MCF 10A (cell line): ENCODE measurements at regions of chr6 and their contacts with region 1.

Region 1: GRCh38 chr6:109073344-109074132 is 21.1 kb downstream of the SESN1 start:
- DNase-seq: peak; percentile 85
- H3K4me3 Mint-ChIP-seq: no peak overlapping the region
- H3K27ac Mint-ChIP-seq: no peak overlapping the region
- H3K4me1 Mint-ChIP-seq: peaks cover 12% of the 10 kb centered on the region
- H3K27me3 Mint-ChIP-seq: no peaks in the 10 kb centered on the region
- CTCF ChIP-seq: peak; percentile 64

Region 2: DNA sequence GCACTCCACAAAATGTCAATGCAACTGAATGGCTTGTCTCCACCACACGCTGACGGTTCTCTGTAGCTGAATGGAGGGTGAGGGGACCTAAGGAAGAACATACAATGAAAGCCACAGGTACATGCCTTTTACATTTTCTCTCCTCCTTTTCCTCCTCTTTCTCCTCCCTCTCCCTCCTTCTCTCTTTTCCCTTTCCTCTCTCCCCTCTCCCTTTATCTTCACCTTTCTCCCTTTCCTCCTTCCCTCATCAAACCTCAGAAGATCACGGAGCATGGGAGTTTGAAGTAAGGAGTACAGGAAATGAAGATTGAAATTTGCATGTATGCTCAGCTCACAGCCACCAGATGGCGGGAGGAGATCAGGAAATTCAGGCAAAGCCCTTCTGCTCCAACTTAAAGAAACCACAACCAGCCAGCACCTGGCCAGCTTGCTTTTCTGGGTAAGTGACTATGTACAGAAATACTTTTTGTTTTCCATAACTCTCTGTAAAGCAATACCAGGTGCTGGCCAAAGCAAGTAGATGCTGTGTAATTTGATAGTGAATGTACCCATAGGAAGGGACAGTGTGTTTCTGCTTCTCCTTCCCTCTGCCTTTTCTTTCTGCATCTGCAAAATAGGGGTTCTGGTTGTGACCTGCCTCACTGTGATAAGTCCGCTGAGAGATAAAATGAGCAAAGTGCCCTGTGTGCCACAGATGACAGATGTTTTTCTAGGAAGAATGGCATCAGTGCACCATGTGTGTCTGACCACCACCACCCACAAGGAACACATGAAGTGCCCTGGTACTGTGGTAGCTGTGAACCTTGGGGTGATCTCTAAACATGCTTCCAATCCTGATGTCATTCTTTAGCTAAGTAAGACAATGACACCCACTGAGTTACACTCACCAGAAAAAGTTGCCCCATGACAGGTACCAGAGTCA is 531.4 kb before region 1 on chr6:
- CTCF ChIA-PET with region 1: interaction called, 109 read pairs
- POLR2A ChIA-PET with region 1: interaction called, 8 read pairs
- intact Hi-C with region 1: loop called (anchors 1 kb)
- DNase-seq: peak; percentile 81
- H3K4me3 Mint-ChIP-seq: no peak overlapping the region
- H3K27ac Mint-ChIP-seq: no peak overlapping the region
- H3K4me1 Mint-ChIP-seq: peaks cover 6% of the 10 kb centered on the region
- H3K27me3 Mint-ChIP-seq: no peaks in the 10 kb centered on the region
- CTCF ChIP-seq: peak; percentile 88

Region 3: GRCh38 chr6:108835218-108835850 is 238.2 kb before region 1 on chr6:
- CTCF ChIA-PET with region 1: interaction called, 8 read pairs
- POLR2A ChIA-PET with region 1: interaction called, 5 read pairs
- intact Hi-C with region 1: loop called (anchors 1 kb)
- DNase-seq: peak; percentile 78
- H3K4me3 Mint-ChIP-seq: no peak overlapping the region
- H3K27ac Mint-ChIP-seq: no peak overlapping the region
- H3K4me1 Mint-ChIP-seq: peaks cover 34% of the 10 kb centered on the region
- H3K27me3 Mint-ChIP-seq: no peaks in the 10 kb centered on the region
- CTCF ChIP-seq: peak; percentile 94

Region 4: DNA sequence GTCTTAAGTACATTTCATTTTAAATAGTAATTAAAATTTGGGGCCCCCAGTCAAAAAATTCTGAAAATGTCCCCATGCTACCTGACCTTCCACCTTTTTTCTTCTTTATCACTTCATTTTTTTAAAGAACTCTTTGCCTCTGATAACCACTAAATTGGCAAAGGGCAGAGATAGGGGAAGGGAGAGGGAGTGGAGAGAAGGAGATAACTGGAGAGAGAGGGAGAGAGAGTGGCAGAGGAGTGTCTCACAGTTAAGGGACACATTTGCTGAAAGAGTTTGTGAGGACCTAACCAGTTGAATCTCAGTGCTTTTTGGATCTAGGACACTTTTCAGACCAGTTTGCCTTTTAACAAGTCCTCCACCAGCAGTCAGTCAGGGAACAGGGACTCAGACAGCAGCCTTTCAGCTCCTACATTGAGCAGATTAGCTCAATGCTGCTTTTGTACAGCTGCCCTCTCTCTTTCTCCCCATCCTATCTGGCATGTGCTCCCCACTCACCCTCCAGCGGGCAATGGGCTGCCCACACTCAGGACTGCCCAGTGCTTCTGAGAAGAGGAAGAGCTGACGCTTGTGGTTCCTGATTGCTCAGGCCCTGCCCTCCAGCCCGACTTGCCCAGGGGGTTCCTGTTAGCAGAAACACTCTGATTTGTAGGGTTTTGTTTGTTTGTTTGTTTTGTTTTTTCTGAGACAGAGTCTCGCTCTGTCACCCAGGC is 210.9 kb before region 1 on chr6:
- CTCF ChIA-PET with region 1: interaction called, 10 read pairs
- POLR2A ChIA-PET with region 1: no interaction called
- intact Hi-C with region 1: no loop called
- DNase-seq: no peak
- H3K4me3 Mint-ChIP-seq: no peak overlapping the region
- H3K27ac Mint-ChIP-seq: no peak overlapping the region
- H3K4me1 Mint-ChIP-seq: no peaks in the 10 kb centered on the region
- H3K27me3 Mint-ChIP-seq: no peaks in the 10 kb centered on the region
- CTCF ChIP-seq: no peak

Region 5: GRCh38 chr6:109002051-109002697 is 71.4 kb before region 1 on chr6:
- CTCF ChIA-PET with region 1: interaction called, 3 read pairs
- POLR2A ChIA-PET with region 1: interaction called, 61 read pairs
- intact Hi-C with region 1: no loop called
- DNase-seq: peak; percentile 88
- H3K4me3 Mint-ChIP-seq: peak overlapping the region; percentile 62
- H3K27ac Mint-ChIP-seq: peak overlapping the region; percentile 77
- H3K4me1 Mint-ChIP-seq: peaks cover 34% of the 10 kb centered on the region
- H3K27me3 Mint-ChIP-seq: no peaks in the 10 kb centered on the region
- CTCF ChIP-seq: no peak

Region 6: DNA sequence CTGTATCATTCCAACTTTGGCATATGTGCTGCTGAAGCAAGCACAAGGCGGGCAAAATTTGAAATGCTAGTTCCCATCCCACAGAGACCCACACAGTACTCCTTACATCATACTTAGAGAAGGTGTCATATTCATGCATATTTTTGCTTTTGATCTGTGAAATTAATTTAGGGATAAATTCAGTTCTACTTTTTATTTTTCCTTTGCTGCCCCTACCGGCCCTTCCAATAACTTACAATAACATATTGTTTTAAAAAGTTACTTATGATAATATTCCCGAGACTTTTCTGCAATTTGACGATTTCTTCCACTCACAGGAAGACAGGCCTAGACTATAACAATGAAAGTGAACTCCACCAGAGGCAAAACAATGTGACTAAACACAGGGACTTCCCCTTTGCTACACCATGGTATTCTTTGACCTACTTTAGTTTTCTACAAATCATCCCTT is 13.9 kb before region 1 on chr6:
- CTCF ChIA-PET with region 1: interaction called, 13 read pairs
- POLR2A ChIA-PET with region 1: interaction called, 10 read pairs
- intact Hi-C with region 1: no loop called
- DNase-seq: peak; percentile 71
- H3K4me3 Mint-ChIP-seq: peak overlapping the region; percentile 61
- H3K27ac Mint-ChIP-seq: peak overlapping the region; percentile 96
- H3K4me1 Mint-ChIP-seq: peaks cover 52% of the 10 kb centered on the region
- H3K27me3 Mint-ChIP-seq: no peaks in the 10 kb centered on the region
- CTCF ChIP-seq: peak; percentile 56

Region 7: DNA sequence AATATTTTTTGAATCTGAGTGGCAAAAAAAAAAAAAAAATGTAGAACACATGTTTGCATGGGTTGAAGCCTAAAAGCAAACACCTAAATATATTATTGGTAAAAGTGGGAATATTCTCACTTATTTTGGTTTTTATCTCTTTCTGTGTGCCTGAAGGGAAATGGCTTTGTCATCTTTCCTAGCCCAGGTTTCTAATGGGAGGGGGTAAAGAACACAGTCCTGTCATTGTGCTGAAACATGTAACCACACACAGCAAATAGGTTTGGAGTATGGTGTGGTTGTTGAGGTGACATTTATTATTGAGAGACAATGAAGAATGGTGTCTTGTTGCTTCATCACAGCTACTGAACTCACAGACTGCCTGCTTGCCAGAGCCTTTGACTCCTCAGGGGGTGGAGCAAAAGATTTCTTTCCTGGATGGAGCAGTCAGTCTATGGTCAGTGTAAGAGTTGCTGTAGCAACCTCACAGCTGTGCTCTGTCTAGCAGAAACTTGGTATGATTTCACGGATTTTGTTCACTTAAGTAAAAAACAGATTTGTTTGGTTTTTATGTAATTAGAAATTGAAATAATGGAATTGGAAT is 91.9 kb after region 1 on chr6:
- CTCF ChIA-PET with region 1: no interaction called
- POLR2A ChIA-PET with region 1: no interaction called
- intact Hi-C with region 1: no loop called
- DNase-seq: peak; percentile 46
- H3K4me3 Mint-ChIP-seq: no peak overlapping the region
- H3K27ac Mint-ChIP-seq: no peak overlapping the region
- H3K4me1 Mint-ChIP-seq: peaks cover 4% of the 10 kb centered on the region
- H3K27me3 Mint-ChIP-seq: no peaks in the 10 kb centered on the region
- CTCF ChIP-seq: no peak

Region 8: GRCh38 chr6:109224116-109224875 is 150.8 kb after region 1 on chr6:
- CTCF ChIA-PET with region 1: no interaction called
- POLR2A ChIA-PET with region 1: no interaction called
- intact Hi-C with region 1: no loop called
- DNase-seq: no peak
- H3K4me3 Mint-ChIP-seq: no peak overlapping the region
- H3K27ac Mint-ChIP-seq: no peak overlapping the region
- H3K4me1 Mint-ChIP-seq: no peaks in the 10 kb centered on the region
- H3K27me3 Mint-ChIP-seq: no peaks in the 10 kb centered on the region
- CTCF ChIP-seq: no peak